ENCODE measurements at regions of chr9 and their contacts with region 1.

Region 1: GRCh38 chr9:8703904-8704303 is 904.3 kb upstream of the DMAC1 start:
- DNase-seq: no peak
- H3K4me3 ChIP-seq: no peak overlapping the region
- H3K27ac ChIP-seq: no peak overlapping the region
- H3K4me1 ChIP-seq: no peaks in the 10 kb centered on the region
- H3K27me3 ChIP-seq: no peaks in the 10 kb centered on the region
- CTCF ChIP-seq: no peak
- POLR2A ChIP-seq: no peak

Region 2: GRCh38 chr9:7659766-7660165 is 1044.1 kb before region 1 on chr9:
- intact Hi-C with region 1: loop called (anchors 5 kb)
- DNase-seq: no peak
- H3K4me3 ChIP-seq: no peak overlapping the region
- H3K27ac ChIP-seq: no peak overlapping the region
- H3K4me1 ChIP-seq: no peaks in the 10 kb centered on the region
- H3K27me3 ChIP-seq: no peaks in the 10 kb centered on the region
- CTCF ChIP-seq: no peak
- POLR2A ChIP-seq: no peak

Region 3: DNA sequence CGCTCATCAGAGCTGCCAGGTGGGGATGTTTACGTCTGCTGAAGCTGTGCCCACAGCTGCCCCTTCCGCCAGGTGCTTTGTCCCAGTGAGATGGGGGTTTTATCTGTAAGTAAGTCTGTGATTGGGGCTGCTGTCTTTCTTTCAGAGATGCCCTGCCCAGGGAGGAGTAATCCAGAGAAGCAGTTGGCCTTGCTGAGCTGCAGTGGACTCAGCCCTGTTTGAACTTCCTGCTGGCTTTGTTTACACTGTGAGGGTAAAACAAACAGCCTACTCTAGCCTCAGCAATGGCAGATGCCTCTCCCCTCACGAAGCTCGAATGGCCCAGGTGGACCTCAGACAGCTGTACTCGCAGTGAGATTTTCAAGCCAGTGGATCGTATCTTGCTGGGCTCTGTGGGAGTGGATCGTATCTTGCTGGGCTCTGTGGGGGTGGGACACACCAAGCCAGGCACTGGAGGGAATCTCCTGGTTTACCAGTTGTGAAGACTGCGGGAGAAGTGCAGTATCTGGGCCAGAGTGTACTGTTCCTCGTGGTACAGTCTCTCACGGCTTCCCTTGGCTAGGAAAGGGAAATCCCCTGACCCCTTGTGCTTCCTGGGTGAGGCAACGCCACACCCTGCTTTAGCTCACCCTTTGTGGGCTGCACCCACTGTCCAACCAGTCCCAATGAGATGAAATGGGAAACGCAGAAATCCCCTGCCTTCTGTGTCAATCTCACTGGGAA is 374.2 kb before region 1 on chr9:
- intact Hi-C with region 1: no loop called
- DNase-seq: no peak
- H3K4me3 ChIP-seq: no peak overlapping the region
- H3K27ac ChIP-seq: no peak overlapping the region
- H3K4me1 ChIP-seq: no peaks in the 10 kb centered on the region
- H3K27me3 ChIP-seq: no peaks in the 10 kb centered on the region
- CTCF ChIP-seq: no peak
- POLR2A ChIP-seq: no peak

Region 4: DNA sequence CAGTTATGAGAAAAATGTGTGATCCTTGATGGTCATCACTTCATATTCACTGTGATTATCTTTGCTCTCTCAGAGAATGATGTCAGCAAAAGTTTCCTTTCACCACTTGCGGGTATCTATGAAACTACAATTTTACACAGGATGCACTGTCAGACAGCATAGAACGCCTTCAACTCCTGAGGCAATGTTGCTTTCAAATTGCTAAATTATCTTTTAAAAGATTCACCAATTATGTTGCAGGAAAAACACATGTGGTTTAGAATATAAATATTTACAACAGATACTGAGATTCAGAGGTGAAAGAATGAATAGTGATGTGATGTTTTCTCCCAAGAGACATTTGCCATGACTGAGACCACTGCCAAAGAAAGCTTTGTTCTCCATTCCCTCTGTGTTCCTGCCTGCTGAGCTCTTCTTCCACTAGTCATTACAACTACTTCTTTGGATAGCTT is 24.5 kb before region 1 on chr9:
- intact Hi-C with region 1: no loop called
- DNase-seq: no peak
- H3K4me3 ChIP-seq: no peak overlapping the region
- H3K27ac ChIP-seq: no peak overlapping the region
- H3K4me1 ChIP-seq: no peaks in the 10 kb centered on the region
- H3K27me3 ChIP-seq: no peaks in the 10 kb centered on the region
- CTCF ChIP-seq: no peak
- POLR2A ChIP-seq: no peak

Region 5: DNA sequence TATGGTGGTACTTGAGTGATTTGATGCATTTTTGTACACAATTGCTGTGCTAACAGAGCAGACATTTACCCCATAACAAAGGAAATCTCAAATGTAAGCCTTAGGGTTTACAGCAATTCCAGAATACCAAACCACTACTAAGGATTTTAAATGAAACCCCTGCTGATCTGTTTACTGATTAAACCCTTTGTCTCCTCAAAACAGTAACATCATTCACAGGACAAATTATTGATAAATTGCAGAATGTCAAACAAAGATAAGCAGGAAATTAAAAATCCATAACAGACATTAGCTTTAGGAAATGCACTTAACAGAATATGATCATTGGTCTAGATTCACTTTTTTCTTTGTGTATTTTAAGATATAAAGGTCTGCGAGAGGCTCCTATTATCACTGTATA is 112.0 kb after region 1 on chr9:
- intact Hi-C with region 1: no loop called
- DNase-seq: no peak
- H3K4me3 ChIP-seq: no peak overlapping the region
- H3K27ac ChIP-seq: no peak overlapping the region
- H3K4me1 ChIP-seq: no peaks in the 10 kb centered on the region
- H3K27me3 ChIP-seq: no peaks in the 10 kb centered on the region
- CTCF ChIP-seq: no peak
- POLR2A ChIP-seq: no peak

Region 6: DNA sequence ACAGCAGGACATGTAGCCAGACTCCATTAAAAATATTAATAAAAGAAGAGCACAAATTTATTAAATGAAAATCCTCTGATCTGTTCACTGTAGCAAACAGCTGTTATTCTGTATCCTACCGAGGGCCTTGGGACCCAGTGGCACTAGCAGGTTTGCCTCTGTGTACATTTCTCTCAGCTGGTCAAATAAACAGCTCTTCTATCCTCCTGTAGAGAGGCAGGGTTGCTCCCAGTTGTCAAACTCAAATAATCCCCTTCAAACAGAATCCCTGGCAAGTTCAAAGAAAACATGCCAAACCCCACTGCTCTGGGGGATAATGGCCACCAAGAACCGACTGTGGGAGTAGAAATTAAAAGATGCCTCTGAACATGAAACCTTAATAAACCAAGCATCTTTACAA is 357.7 kb after region 1 on chr9:
- intact Hi-C with region 1: no loop called
- DNase-seq: no peak
- H3K4me3 ChIP-seq: no peak overlapping the region
- H3K27ac ChIP-seq: no peak overlapping the region
- H3K4me1 ChIP-seq: no peaks in the 10 kb centered on the region
- H3K27me3 ChIP-seq: no peaks in the 10 kb centered on the region
- CTCF ChIP-seq: no peak
- POLR2A ChIP-seq: no peak

Measured in breast epithelium (tissue), 4 donors.